ENCODE measurements at regions of chr19 and their contacts with region 1.

Region 1: GRCh38 chr19:46766569-46767317 is 20.5 kb upstream of the STRN4 start:
- DNase-seq: peak; percentile 73 to 81 (median 75)
- ATAC-seq: peak; percentile 95
- H3K4me3 ChIP-seq: no peak overlapping the region
- H3K27ac ChIP-seq: no peak overlapping the region; the same call in 2 of the 3 replicates
- H3K4me1 ChIP-seq: peaks cover 0 to 7% of the 10 kb centered on the region in 2 experiments; a peak in 3 of 5 replicates
- H3K27me3 ChIP-seq: no peaks in the 10 kb centered on the region
- CTCF ChIP-seq: peak; percentile 73 to 93 (median 75)
- EP300 ChIP-seq: no peak
- POLR2A ChIP-seq: no peak
- RAD21 ChIP-seq: peak in 1 of 2 experiments; percentile 45; a peak in 2 of 4 replicates

Region 2: DNA sequence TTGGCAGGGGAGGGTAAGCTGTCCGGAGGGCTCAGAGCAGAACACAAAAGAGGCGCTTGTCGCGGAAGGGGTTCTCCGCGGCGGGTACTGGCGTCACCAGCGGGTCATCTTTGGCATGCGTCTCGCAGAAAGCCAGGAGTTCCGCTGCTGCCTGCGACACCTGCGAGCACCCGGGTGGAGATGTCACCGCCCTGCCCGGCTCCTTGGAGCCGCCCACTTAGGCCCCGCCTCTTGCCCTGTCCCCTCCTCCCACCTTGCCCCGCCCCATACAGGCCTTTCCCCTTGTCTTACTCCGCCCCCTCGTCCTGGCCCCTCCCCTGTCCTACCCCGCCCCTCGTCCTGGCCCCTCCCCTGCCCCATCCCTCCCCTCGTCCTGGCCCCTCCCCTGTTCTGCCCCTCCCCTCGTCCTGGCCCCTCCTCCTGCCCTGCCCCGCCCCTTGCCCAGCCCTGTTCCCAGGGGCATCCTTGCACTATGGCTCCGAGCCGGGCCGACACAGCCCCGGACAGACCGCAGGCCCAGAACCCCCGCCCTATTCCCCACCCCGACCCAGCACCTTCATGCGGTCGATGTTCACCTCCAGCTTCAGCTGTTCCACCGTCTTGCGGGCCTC is 132.6 kb before region 1 on chr19:
- CTCF ChIA-PET with region 1: no interaction called
- POLR2A ChIA-PET with region 1: no interaction called
- in situ Hi-C with region 1: no loop called
- intact Hi-C with region 1: no loop called
- DNase-seq: peak; percentile 94 to 98 (median 98)
- ATAC-seq: peak; percentile 83
- H3K4me3 ChIP-seq: peak overlapping the region; percentile 32
- H3K27ac ChIP-seq: no peak overlapping the region
- H3K4me1 ChIP-seq: peaks cover 38 to 74% of the 10 kb centered on the region in 2 experiments
- H3K27me3 ChIP-seq: no peaks in the 10 kb centered on the region
- CTCF ChIP-seq: no peak
- EP300 ChIP-seq: no peak
- POLR2A ChIP-seq: no peak
- RAD21 ChIP-seq: no peak

Region 3: GRCh38 chr19:46776927-46777911 is 10.5 kb after region 1 on chr19:
- CTCF ChIA-PET with region 1: no interaction called
- POLR2A ChIA-PET with region 1: interaction called, 17 read pairs
- in situ Hi-C with region 1: no loop called
- intact Hi-C with region 1: no loop called
- DNase-seq: peak; percentile 68 to 88 (median 84)
- ATAC-seq: peak; percentile 55
- H3K4me3 ChIP-seq: no peak overlapping the region
- H3K27ac ChIP-seq: no peak overlapping the region
- H3K4me1 ChIP-seq: peaks cover 0 to 16% of the 10 kb centered on the region in 2 experiments; a peak in 3 of 5 replicates
- H3K27me3 ChIP-seq: no peaks in the 10 kb centered on the region
- CTCF ChIP-seq: no peak
- EP300 ChIP-seq: no peak
- POLR2A ChIP-seq: peak; percentile 58
- RAD21 ChIP-seq: no peak

Region 4: GRCh38 chr19:46828484-46828883 is 61.7 kb after region 1 on chr19:
- CTCF ChIA-PET with region 1: no interaction called
- POLR2A ChIA-PET with region 1: no interaction called
- in situ Hi-C with region 1: no loop called
- intact Hi-C with region 1: no loop called
- DNase-seq: no peak
- ATAC-seq: no peak
- H3K4me3 ChIP-seq: no peak overlapping the region
- H3K27ac ChIP-seq: no peak overlapping the region
- H3K4me1 ChIP-seq: peaks cover 0 to 11% of the 10 kb centered on the region in 2 experiments; a peak in 4 of 5 replicates
- H3K27me3 ChIP-seq: no peaks in the 10 kb centered on the region
- CTCF ChIP-seq: no peak
- EP300 ChIP-seq: no peak
- POLR2A ChIP-seq: no peak
- RAD21 ChIP-seq: no peak

Region 5: DNA sequence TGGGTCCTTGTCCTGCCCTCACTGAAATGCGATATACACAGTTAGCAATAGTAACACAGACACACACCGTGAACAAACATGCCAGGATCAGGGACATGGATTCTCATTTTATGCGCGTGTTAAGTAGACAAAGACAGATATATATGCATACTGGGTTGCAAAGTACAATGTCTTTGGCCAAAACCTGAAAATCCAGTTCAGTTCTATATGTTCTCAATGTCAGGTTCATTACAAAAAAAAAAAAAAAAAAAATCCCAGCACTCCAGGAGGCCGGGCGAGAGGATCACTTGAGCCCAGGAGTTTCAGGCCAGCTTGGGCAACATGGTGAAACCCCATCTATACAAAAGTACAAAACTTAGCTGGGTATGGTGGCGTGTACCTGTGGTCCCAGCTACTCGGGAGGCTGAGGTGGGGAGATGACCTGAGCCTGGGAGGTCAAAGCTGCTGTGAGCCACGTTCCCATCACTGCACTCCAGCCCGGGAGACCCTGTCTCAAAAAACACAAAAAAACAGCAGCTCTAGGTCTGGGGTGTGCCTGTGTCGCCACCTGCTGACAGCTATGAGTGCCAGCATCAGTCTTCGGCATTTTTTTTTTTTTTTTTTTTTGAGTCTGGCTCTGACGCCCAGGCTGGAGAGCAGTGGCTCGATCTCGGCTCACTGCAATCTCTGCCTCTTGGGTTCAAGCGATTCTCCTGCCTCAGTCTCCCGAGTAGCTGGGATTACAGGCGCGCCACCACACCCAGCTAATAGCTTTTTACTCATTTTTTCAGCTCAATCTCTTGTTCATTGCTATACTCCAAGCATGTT is 73.6 kb after region 1 on chr19:
- CTCF ChIA-PET with region 1: interaction called, 4 read pairs
- POLR2A ChIA-PET with region 1: interaction called, 4 read pairs
- in situ Hi-C with region 1: loop called (anchors 5 kb)
- intact Hi-C with region 1: no loop called
- DNase-seq: peak; percentile 60 to 78 (median 66)
- ATAC-seq: peak; percentile 71
- H3K4me3 ChIP-seq: no peak overlapping the region
- H3K27ac ChIP-seq: no peak overlapping the region
- H3K4me1 ChIP-seq: peaks cover 33 to 37% of the 10 kb centered on the region in 2 experiments
- H3K27me3 ChIP-seq: no peaks in the 10 kb centered on the region
- CTCF ChIP-seq: peak; percentile 86 to 92 (median 86)
- EP300 ChIP-seq: no peak
- POLR2A ChIP-seq: no peak
- RAD21 ChIP-seq: peak; percentile 74 to 75